CD8-positive, alpha-beta memory T cell (primary cell): ENCODE measurements at regions of chr11 and their contacts with region 1.

Region 1: GRCh38 chr11:62573592-62574362 is at the start of gene EEF1G:
- DNase-seq: peak; percentile 96 to 100 (median 99)
- H3K4me3 ChIP-seq: peak within 1 kb of the TSS; percentile 94
- H3K4me3 Mint-ChIP-seq: peak within 1 kb of the TSS; percentile 90 to 98 (median 96)
- H3K27ac ChIP-seq: peak within 1 kb of the TSS; percentile 93
- H3K27ac Mint-ChIP-seq: peak within 1 kb of the TSS; percentile 90 to 97 (median 95)
- H3K4me1 ChIP-seq: peaks cover 24% of the 10 kb centered on the region
- H3K4me1 Mint-ChIP-seq: peaks cover 46 to 59% (median 52%) of the 10 kb centered on the region in 3 donors
- H3K27me3 ChIP-seq: no peaks in the 10 kb centered on the region
- H3K27me3 Mint-ChIP-seq: no peaks in the 10 kb centered on the region
- total RNA-seq, gene EEF1G: 1,800 to 1,846 TPM

Region 2: GRCh38 chr11:62556108-62556871 is 17.5 kb before region 1 on chr11:
- CTCF ChIA-PET with region 1: interaction called, 21 read pairs
- POLR2A ChIA-PET with region 1: interaction called, 20 read pairs
- DNase-seq: peak; percentile 74 to 95 (median 83)
- H3K4me3 ChIP-seq: peak overlapping the region; percentile 70
- H3K4me3 Mint-ChIP-seq: peak overlapping the region; percentile 80 to 95 (median 85)
- H3K27ac ChIP-seq: peak overlapping the region; percentile 95
- H3K27ac Mint-ChIP-seq: peak overlapping the region; percentile 97 to 100 (median 99)
- H3K4me1 ChIP-seq: peaks cover 96% of the 10 kb centered on the region
- H3K4me1 Mint-ChIP-seq: peaks cover 91 to 97% (median 96%) of the 10 kb centered on the region in 3 donors
- H3K27me3 ChIP-seq: no peaks in the 10 kb centered on the region
- H3K27me3 Mint-ChIP-seq: peaks cover 0 to 5% of the 10 kb centered on the region in 2 donors

Region 3: DNA sequence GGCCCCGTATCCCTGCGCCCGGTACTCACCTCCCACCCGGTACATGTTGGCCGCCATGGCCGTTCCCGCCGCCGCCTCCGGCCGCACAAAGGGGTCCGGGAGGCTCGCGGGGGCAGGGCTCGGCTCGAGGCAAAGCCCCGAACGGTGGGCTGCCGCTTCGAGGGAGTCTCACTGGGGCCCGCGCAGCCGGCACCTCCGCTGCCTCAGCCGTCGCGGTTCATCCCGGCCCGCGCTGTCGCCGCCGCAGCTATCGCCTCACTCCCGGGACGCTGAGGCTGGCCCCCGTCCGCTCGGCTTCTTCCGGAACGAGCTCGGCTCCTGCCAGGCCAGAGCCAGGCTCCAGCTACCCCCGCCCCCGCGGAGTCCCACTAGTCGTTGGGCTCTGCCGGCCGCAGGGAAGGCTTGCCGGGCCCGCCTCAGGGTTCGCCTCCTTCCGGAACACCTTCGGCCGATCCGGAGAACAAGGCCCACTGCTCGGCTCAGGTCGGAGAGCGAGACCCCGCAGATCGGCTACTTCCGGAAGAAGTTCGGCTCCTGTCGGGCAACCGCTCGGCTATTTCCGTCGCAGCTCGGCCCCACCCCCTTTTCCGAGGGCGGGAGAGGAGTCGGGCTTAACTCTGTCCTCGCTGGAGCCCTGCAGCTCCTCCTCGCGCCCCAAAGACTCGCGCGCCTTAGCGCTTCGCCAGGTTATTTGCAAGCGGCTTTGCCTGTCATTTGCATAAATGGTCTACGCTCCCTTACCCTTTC is 27.8 kb after region 1 on chr11 and contains the start of gene MTA2:
- CTCF ChIA-PET with region 1: no interaction called
- POLR2A ChIA-PET with region 1: interaction called, 19 read pairs
- DNase-seq: peak; percentile 98 to 100 (median 99)
- H3K4me3 ChIP-seq: peak within 1 kb of the TSS; percentile 89
- H3K4me3 Mint-ChIP-seq: peak within 1 kb of the TSS; percentile 91 to 97 (median 93)
- H3K27ac ChIP-seq: peak within 1 kb of the TSS; percentile 86
- H3K27ac Mint-ChIP-seq: peak within 1 kb of the TSS; percentile 93 to 98 (median 96)
- H3K4me1 ChIP-seq: peaks cover 29% of the 10 kb centered on the region
- H3K4me1 Mint-ChIP-seq: peaks cover 49 to 69% (median 52%) of the 10 kb centered on the region in 3 donors
- H3K27me3 ChIP-seq: no peaks in the 10 kb centered on the region
- H3K27me3 Mint-ChIP-seq: peaks cover 0 to 5% of the 10 kb centered on the region in 2 donors
- total RNA-seq, gene MTA2: 248 to 263 TPM

Region 4: GRCh38 chr11:62678770-62679696 is 105.3 kb after region 1 on chr11 and contains the start of gene UBXN1:
- CTCF ChIA-PET with region 1: no interaction called
- POLR2A ChIA-PET with region 1: no interaction called
- DNase-seq: peak; percentile 75 to 87 (median 81)
- H3K4me3 ChIP-seq: peak within 1 kb of the TSS; percentile 97
- H3K4me3 Mint-ChIP-seq: peak within 1 kb of the TSS; percentile 80 to 96 (median 90)
- H3K27ac ChIP-seq: peak within 1 kb of the TSS; percentile 86
- H3K27ac Mint-ChIP-seq: peak within 1 kb of the TSS; percentile 89 to 99 (median 95)
- H3K4me1 ChIP-seq: peaks cover 19% of the 10 kb centered on the region
- H3K4me1 Mint-ChIP-seq: peaks cover 26 to 38% (median 37%) of the 10 kb centered on the region in 3 donors
- H3K27me3 ChIP-seq: no peaks in the 10 kb centered on the region
- H3K27me3 Mint-ChIP-seq: no peaks in the 10 kb centered on the region
- total RNA-seq, gene UBXN1: 142 to 143 TPM

Region 5: DNA sequence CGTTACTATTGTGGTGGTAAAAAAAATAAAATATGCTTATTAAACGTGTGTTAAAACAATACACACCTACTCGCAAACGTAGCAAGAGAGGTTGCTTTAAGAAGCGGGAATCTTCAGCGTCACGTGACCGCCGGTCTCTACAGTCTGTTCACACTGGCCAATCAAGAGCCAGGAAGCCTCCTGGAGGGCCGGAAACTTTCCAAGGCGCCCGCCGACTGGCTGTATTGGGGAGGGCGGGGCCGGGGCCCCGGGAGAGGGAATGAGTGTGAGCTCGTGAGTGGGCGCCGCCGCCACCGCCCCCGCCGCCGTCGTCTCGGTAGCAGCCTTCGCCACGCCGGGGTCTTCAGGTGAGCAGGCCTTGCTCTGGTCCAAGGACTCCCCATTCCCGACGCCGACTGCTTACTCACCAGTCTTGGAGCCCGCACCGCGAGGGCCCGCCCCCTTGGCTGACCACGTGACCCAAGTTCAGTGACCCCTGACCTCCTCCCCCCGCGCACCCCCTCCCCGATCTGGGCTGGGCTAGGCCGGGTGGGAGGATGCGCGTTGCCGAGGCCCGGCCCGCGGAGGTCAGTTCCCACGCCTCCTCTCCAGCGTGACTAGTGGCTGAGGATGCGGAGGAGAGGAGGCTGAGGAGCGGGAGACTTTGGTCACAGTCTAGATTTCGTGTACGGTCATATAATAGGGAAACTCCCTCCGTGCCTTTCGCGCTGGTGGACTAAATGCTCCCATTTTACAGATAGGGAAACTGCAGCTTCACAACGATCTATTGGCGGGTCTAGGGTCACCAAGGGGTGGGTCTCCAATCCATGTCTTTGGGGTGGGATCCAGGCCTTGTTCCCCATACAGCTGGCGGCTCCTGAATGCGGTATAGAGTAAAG is 197.6 kb after region 1 on chr11 and contains the start of gene TAF6L:
- CTCF ChIA-PET with region 1: no interaction called
- POLR2A ChIA-PET with region 1: no interaction called
- DNase-seq: peak; percentile 83 to 93 (median 87)
- H3K4me3 ChIP-seq: peak within 1 kb of the TSS; percentile 42
- H3K4me3 Mint-ChIP-seq: peak within 1 kb of the TSS; percentile 87 to 96 (median 93)
- H3K27ac ChIP-seq: peak within 1 kb of the TSS; percentile 75
- H3K27ac Mint-ChIP-seq: peak within 1 kb of the TSS; percentile 85 to 99 (median 95)
- H3K4me1 ChIP-seq: peaks cover 22% of the 10 kb centered on the region
- H3K4me1 Mint-ChIP-seq: peaks cover 18 to 30% (median 28%) of the 10 kb centered on the region in 3 donors
- H3K27me3 ChIP-seq: no peaks in the 10 kb centered on the region
- H3K27me3 Mint-ChIP-seq: no peaks in the 10 kb centered on the region
- total RNA-seq, gene TAF6L: 21.8 to 24.1 TPM